WTC11 (cell line): ENCODE measurements at regions of chr22 and their contacts with region 1.

Region 1: GRCh38 chr22:32202539-32203180 is 2.2 kb downstream of the RFPL2 start:
- DNase-seq: peak; percentile 63
- ATAC-seq: peak; percentile 27
- H3K4me3 Mint-ChIP-seq: peak overlapping the region; percentile 82
- H3K27ac Mint-ChIP-seq: no peak overlapping the region
- H3K4me1 Mint-ChIP-seq: peaks cover 55% of the 10 kb centered on the region
- H3K27me3 Mint-ChIP-seq: peaks cover 60% of the 10 kb centered on the region
- CTCF ChIP-seq: peak; percentile 37

Region 2: GRCh38 chr22:32076761-32077084 is 125.9 kb before region 1 on chr22:
- CTCF ChIA-PET with region 1: no interaction called
- POLR2A ChIA-PET with region 1: no interaction called
- DNase-seq: no peak
- ATAC-seq: no peak
- H3K4me3 Mint-ChIP-seq: no peak overlapping the region
- H3K27ac Mint-ChIP-seq: no peak overlapping the region
- H3K4me1 Mint-ChIP-seq: no peaks in the 10 kb centered on the region
- H3K27me3 Mint-ChIP-seq: no peaks in the 10 kb centered on the region; the same call in 1 of the 2 replicates
- CTCF ChIP-seq: no peak

Region 3: DNA sequence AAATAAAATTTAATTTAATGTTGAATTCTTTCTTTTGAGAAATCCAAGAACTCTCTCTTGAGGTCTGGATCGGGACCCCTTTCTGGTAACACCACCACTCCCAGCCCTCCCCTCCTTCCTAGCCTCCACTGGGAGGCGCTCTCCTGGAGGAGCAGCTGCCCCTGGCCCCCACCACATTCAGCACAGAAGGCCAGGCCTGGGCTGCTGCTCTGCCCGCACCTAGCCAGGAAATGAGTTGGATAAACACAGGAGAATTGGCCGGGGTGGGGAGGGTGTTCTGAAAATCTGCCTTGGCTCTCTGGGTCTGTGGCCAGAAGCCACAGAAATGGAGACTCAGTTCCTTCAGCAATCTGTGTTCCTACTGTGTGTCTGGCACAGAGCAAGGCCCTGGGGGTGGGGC is 74.8 kb before region 1 on chr22:
- CTCF ChIA-PET with region 1: interaction called, 10 read pairs
- POLR2A ChIA-PET with region 1: no interaction called
- DNase-seq: peak; percentile 74
- ATAC-seq: peak; percentile 91
- H3K4me3 Mint-ChIP-seq: no peak overlapping the region
- H3K27ac Mint-ChIP-seq: no peak overlapping the region
- H3K4me1 Mint-ChIP-seq: peaks cover 11% of the 10 kb centered on the region
- H3K27me3 Mint-ChIP-seq: no peaks in the 10 kb centered on the region
- CTCF ChIP-seq: peak; percentile 43; the same call in 1 of the 2 replicates

Region 4: GRCh38 chr22:32218470-32218869 is 15.8 kb after region 1 on chr22:
- CTCF ChIA-PET with region 1: interaction called, 17 read pairs
- POLR2A ChIA-PET with region 1: no interaction called
- DNase-seq: no peak
- ATAC-seq: no peak
- H3K4me3 Mint-ChIP-seq: no peak overlapping the region
- H3K27ac Mint-ChIP-seq: no peak overlapping the region
- H3K4me1 Mint-ChIP-seq: peaks cover 5% of the 10 kb centered on the region
- H3K27me3 Mint-ChIP-seq: no peaks in the 10 kb centered on the region
- CTCF ChIP-seq: no peak

Region 5: GRCh38 chr22:32378707-32379272 is 176.1 kb after region 1 on chr22:
- CTCF ChIA-PET with region 1: interaction called, 19 read pairs
- POLR2A ChIA-PET with region 1: no interaction called
- DNase-seq: peak; percentile 82
- ATAC-seq: peak; percentile 96
- H3K4me3 Mint-ChIP-seq: no peak overlapping the region
- H3K27ac Mint-ChIP-seq: no peak overlapping the region
- H3K4me1 Mint-ChIP-seq: peaks cover 5% of the 10 kb centered on the region
- H3K27me3 Mint-ChIP-seq: no peaks in the 10 kb centered on the region
- CTCF ChIP-seq: peak; percentile 68